RWPE1 (cell line): ENCODE measurements at regions of chr7 and their contacts with region 1.

Region 1: GRCh38 chr7:143380255-143380645 is 895 bp upstream of the ZYX start:
- DNase-seq: peak; percentile 59
- H3K27ac ChIP-seq: peak overlapping the region; percentile 95
- CTCF ChIP-seq: peak; percentile 97

Region 2: GRCh38 chr7:143345428-143345900 is 34.8 kb before region 1 on chr7:
- CTCF ChIA-PET with region 1: no interaction called
- POLR2A ChIA-PET with region 1: no interaction called
- DNase-seq: no peak
- H3K27ac ChIP-seq: no peak overlapping the region
- CTCF ChIP-seq: no peak

Region 3: DNA sequence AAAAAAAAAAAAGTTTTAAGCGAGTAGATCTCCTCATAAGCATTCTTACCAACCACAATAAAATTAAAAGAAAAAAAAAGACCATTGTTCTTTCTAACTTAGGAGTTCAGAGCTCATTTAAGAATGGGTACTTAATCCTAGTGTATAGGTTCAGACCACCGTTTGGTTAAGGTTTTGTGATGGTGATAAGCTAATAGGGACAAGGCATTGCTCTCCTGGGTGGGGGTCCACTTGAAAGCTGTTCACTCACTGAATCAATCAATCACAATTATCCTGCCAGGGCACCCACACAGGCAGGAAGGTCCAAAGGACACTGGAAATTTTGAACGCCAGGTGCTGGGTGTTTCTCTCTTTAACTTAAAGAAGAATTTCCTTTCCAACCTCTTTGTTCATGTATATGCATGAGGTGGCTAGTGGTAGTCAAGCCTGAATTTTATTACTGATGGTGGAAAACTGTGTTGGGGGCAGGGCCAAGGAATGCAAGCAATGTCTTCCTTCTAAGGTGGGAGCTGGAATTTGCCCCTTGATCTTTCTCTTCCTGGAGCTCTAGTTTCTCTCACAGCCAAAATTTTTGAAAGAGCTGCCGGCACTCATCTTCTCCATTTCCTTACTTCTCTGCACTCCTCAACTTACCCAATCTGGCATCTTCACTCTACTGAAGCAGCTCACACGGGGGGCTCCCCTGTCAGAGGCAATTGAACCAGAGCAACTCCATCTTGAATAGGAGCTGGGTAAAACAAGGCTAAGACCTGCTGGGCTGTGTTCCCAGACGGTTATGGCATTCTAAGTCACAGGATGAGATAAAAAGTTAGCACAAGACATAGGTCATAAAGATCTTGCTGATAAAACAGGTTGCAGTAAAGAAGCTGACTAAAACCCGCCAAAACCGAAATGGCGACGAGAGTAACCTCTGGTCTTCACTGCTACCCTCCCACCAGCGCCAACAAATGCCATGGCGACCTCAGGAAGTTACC is 10.3 kb before region 1 on chr7:
- CTCF ChIA-PET with region 1: interaction called, 17 read pairs
- POLR2A ChIA-PET with region 1: no interaction called
- DNase-seq: no peak
- H3K27ac ChIP-seq: no peak overlapping the region
- CTCF ChIP-seq: no peak

Region 4: GRCh38 chr7:143485500-143485899 is 105.2 kb after region 1 on chr7:
- CTCF ChIA-PET with region 1: no interaction called
- POLR2A ChIA-PET with region 1: no interaction called
- DNase-seq: no peak
- H3K27ac ChIP-seq: no peak overlapping the region
- CTCF ChIP-seq: no peak